ENCODE measurements at regions of chr20 and their contacts with region 1.

Region 1: DNA sequence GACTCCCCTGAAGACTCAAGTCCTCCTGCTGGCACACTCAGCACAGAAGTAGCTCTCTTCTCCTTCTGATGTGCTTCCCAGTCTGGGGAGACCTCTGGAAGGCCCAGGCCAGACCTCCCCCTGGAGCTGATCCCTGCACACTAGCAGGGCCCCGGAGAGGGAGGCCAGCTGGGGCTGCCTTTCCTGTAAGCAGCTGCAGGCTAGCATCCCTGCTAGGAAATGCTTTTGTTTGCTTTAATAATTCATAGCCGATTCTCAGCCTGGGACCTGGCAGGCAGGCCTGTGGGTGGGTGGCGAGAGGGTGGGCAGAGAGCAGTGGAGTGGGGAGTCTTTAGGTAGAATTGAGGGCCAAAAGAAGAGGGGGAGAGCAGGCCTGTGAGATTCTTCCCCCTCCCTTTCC is 5.2 kb downstream of the EBF4 start:
- DNase-seq: peak in 1 of 5 donors; percentile 5
- ATAC-seq: no peak
- H3K4me3 ChIP-seq: no peak overlapping the region
- H3K27ac ChIP-seq: no peak overlapping the region
- H3K4me1 ChIP-seq: peaks cover 0 to 12% (median 0%) of the 10 kb centered on the region in 12 donors
- H3K27me3 ChIP-seq: peaks cover 0 to 32% (median 4%) of the 10 kb centered on the region in 9 donors
- CTCF ChIP-seq: no peak
- POLR2A ChIP-seq: no peak

Region 2: GRCh38 chr20:2742934-2743559 is 45.3 kb after region 1 on chr20:
- intact Hi-C with region 1: loop called in 2 of 10 experiments (anchors 5 kb)
- DNase-seq: peak in 2 of 5 donors; percentile 32 to 36
- ATAC-seq: peak in 3 of 4 donors; percentile 37 to 55 (median 54)
- H3K4me3 ChIP-seq: no peak overlapping the region
- H3K27ac ChIP-seq: peak overlapping the region in 1 of 12 donors; percentile 32
- H3K4me1 ChIP-seq: peaks cover 0 to 9% (median 0%) of the 10 kb centered on the region in 12 donors
- H3K27me3 ChIP-seq: peaks cover 0 to 5% (median 0%) of the 10 kb centered on the region in 9 donors
- CTCF ChIP-seq: peak; percentile 47 to 90 (median 66)
- POLR2A ChIP-seq: no peak

Measured in heart left ventricle (tissue), 16 donors.